ENCODE measurements at regions of chr7 and their contacts with region 1.

Region 1: GRCh38 chr7:50206453-50207250 is 97.9 kb upstream of the IKZF1 start:
- DNase-seq: peak; percentile 82
- H3K4me3 Mint-ChIP-seq: peak overlapping the region; percentile 56
- H3K27ac Mint-ChIP-seq: peak overlapping the region; percentile 92
- H3K4me1 Mint-ChIP-seq: peaks cover 84% of the 10 kb centered on the region
- H3K27me3 Mint-ChIP-seq: no peaks in the 10 kb centered on the region

Region 2: DNA sequence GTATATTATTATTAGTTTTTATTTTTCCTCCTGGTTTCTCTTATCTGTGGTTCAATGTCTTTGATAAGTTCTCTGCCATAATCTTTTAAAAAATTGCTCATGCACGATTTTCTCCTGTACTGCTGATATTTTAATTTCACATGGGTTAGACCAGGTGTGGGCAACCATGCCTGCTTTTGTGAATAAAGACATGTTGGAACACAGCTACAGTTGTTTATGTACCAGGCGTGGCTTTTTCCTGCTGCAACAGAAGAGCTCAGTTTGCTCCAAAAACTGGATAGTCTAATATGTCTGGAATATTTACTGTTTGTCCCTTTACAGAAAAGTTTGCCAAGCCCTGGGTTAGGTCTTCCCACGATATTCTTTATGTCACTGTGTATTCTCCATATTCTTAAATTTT is 328.0 kb before region 1 on chr7:
- CTCF ChIA-PET with region 1: no interaction called
- DNase-seq: no peak
- H3K4me3 Mint-ChIP-seq: no peak overlapping the region
- H3K27ac Mint-ChIP-seq: no peak overlapping the region
- H3K4me1 Mint-ChIP-seq: no peaks in the 10 kb centered on the region
- H3K27me3 Mint-ChIP-seq: peaks cover 4% of the 10 kb centered on the region

Region 3: GRCh38 chr7:50112250-50112975 is 94.2 kb before region 1 on chr7:
- CTCF ChIA-PET with region 1: no interaction called
- DNase-seq: no peak
- H3K4me3 Mint-ChIP-seq: no peak overlapping the region
- H3K27ac Mint-ChIP-seq: no peak overlapping the region
- H3K4me1 Mint-ChIP-seq: no peaks in the 10 kb centered on the region
- H3K27me3 Mint-ChIP-seq: peaks cover 32% of the 10 kb centered on the region

Region 4: GRCh38 chr7:50125766-50126165 is 80.9 kb before region 1 on chr7:
- CTCF ChIA-PET with region 1: no interaction called
- DNase-seq: no peak
- H3K4me3 Mint-ChIP-seq: no peak overlapping the region
- H3K27ac Mint-ChIP-seq: no peak overlapping the region
- H3K4me1 Mint-ChIP-seq: peaks cover 5% of the 10 kb centered on the region
- H3K27me3 Mint-ChIP-seq: peaks cover 3% of the 10 kb centered on the region

Region 5: GRCh38 chr7:50227726-50228125 is 21.1 kb after region 1 on chr7:
- CTCF ChIA-PET with region 1: interaction called, 25 read pairs
- DNase-seq: no peak
- H3K4me3 Mint-ChIP-seq: peak overlapping the region; percentile 66
- H3K27ac Mint-ChIP-seq: peak overlapping the region; percentile 89
- H3K4me1 Mint-ChIP-seq: peaks cover 45% of the 10 kb centered on the region
- H3K27me3 Mint-ChIP-seq: no peaks in the 10 kb centered on the region

Region 6: GRCh38 chr7:50304158-50304910 is 97.7 kb after region 1 on chr7 and contains the start of gene IKZF1:
- CTCF ChIA-PET with region 1: interaction called, 75 read pairs
- DNase-seq: peak; percentile 66
- H3K4me3 Mint-ChIP-seq: peak within 1 kb of the TSS; percentile 99
- H3K27ac Mint-ChIP-seq: peak within 1 kb of the TSS; percentile 99
- H3K4me1 Mint-ChIP-seq: peaks cover 40% of the 10 kb centered on the region
- H3K27me3 Mint-ChIP-seq: peaks cover 9% of the 10 kb centered on the region

Region 7: GRCh38 chr7:50335795-50336754 is 129.4 kb after region 1 on chr7:
- CTCF ChIA-PET with region 1: interaction called, 45 read pairs
- DNase-seq: peak; percentile 84
- H3K4me3 Mint-ChIP-seq: no peak overlapping the region
- H3K27ac Mint-ChIP-seq: no peak overlapping the region
- H3K4me1 Mint-ChIP-seq: no peaks in the 10 kb centered on the region
- H3K27me3 Mint-ChIP-seq: no peaks in the 10 kb centered on the region

Region 8: DNA sequence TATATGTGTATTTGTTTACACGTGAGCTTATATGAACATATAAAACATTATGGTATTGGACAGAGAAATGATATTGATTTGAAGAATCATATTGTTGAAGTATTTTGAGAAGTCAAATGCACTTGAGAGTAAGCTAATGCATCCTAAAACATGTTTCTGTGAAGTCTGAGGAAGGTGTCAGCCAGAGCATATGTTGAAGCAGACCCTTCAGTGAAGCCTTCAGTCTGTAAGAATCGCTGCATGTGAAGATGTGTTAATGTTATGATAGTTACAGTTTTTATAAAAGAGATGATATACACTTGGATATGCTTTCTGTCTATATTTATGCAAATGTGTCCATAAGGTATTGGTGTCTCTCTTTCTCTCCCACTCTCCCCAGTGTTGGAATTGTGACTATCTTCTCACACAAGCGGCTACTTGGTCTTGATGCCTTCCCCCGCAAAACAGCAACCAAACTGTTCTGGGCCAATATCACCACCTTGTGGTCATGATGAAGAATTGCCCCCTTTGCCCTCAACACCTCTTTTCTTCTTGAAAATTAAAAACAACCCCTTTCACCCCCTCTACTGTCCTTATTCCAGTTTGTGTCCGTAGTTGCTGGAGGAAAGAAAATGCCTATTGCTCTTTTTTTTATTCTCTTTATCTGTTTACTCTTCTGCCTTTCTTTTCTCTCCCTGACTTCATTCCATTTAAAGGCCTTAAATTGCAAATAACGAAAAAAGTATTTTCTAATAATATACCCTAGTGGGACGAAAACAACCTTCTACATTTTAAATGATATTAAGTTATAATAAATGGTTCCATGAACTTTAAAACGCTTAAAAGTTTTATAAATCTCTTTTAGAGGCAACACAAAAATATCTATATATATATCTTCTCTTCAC is 162.7 kb after region 1 on chr7:
- CTCF ChIA-PET with region 1: interaction called, 162 read pairs
- DNase-seq: peak; percentile 61
- H3K4me3 Mint-ChIP-seq: no peak overlapping the region
- H3K27ac Mint-ChIP-seq: peak overlapping the region; percentile 76
- H3K4me1 Mint-ChIP-seq: peaks cover 97% of the 10 kb centered on the region
- H3K27me3 Mint-ChIP-seq: no peaks in the 10 kb centered on the region

Measured in activated naive CD4-positive, alpha-beta T cell treated with anti-CD3 and anti-CD28 coated beads, Interleukin-2, amount 10 ng/mL, durations not matched to agents 7 days and 5 days (primary cell).